ENCODE measurements at regions of chr7 and their contacts with region 1.

Region 1: GRCh38 chr7:149239345-149240191 is at the start of gene ZNF212:
- DNase-seq: peak; percentile 91
- H3K4me3 ChIP-seq: peak within 1 kb of the TSS; percentile 62 to 86 (median 73)
- H3K27ac ChIP-seq: peak within 1 kb of the TSS; percentile 28
- H3K4me1 ChIP-seq: peaks cover 9% of the 10 kb centered on the region
- H3K27me3 ChIP-seq: no peaks in the 10 kb centered on the region
- CTCF ChIP-seq: peak; percentile 91 to 97
- POLR2A ChIP-seq: no peak
- total RNA-seq, gene ZNF212: 9.0 and 9.2 TPM in 2 replicates

Region 2: DNA sequence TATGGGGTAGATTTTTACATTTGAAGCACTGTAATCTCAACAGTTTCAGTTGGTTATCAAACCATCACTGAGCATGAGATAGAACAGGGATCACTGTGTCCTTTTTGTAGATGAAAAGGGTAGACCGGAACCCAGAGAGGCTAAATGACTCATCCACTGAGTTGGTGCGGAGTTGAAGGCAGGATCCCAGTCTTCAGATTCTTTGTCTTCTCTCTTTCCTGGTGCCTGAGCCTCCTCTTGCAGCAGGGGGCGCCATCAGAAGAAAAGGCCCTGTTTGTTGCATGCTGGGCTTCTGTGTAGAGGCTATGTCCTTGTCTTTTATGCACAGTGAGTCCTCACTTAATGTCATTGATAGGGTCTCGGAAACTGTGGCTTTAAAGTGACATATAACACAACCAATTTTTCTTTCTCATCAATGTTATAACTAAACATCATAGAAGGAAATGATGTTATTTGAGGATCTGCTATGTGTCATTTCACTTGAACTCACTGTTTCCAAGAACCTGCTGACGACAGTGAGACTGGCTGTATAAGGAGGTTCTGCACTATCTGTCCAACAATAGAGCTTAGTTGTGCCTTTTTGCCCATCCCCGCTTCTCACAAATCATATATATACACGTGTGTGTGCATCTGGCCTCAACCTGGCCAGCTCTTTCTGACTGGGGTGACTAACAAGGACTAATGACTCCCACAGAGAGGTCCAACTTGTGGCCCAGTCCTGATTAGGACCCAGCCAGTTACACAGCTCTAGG is 29.9 kb before region 1 on chr7:
- CTCF ChIA-PET with region 1: no interaction called
- POLR2A ChIA-PET with region 1: no interaction called
- dilution Hi-C with region 1: no loop called
- intact Hi-C with region 1: loop called (anchors 1 kb)
- DNase-seq: peak; percentile 59
- H3K4me3 ChIP-seq: no peak overlapping the region
- H3K27ac ChIP-seq: peak overlapping the region; percentile 28
- H3K4me1 ChIP-seq: peaks cover 4% of the 10 kb centered on the region
- H3K27me3 ChIP-seq: no peaks in the 10 kb centered on the region
- CTCF ChIP-seq: peak; percentile 73 to 82
- POLR2A ChIP-seq: no peak

Region 3: DNA sequence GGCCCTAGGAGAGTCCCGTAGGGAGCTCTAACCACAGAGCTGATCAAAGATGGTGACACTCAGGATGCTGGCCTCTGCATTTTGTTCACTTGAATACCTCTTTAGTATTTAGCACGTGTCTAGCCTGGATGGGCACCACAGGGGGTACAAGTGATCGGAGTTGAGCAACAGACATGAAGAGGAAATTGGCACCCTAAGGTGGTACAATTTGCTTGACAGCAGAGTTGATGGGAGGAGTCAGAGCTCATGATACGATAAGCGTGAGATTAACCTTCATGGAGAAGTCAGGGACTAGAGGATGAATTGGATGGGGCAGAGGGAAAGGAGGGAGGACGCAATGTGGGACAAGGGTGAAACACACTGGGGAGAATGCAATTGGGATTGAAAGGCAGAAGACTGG is 10.0 kb before region 1 on chr7:
- CTCF ChIA-PET with region 1: no interaction called
- POLR2A ChIA-PET with region 1: no interaction called
- dilution Hi-C with region 1: no loop called
- intact Hi-C with region 1: loop called (anchors 1 kb)
- DNase-seq: no peak
- H3K4me3 ChIP-seq: no peak overlapping the region
- H3K27ac ChIP-seq: no peak overlapping the region
- H3K4me1 ChIP-seq: no peaks in the 10 kb centered on the region
- H3K27me3 ChIP-seq: no peaks in the 10 kb centered on the region
- CTCF ChIP-seq: no peak
- POLR2A ChIP-seq: no peak

Region 4: DNA sequence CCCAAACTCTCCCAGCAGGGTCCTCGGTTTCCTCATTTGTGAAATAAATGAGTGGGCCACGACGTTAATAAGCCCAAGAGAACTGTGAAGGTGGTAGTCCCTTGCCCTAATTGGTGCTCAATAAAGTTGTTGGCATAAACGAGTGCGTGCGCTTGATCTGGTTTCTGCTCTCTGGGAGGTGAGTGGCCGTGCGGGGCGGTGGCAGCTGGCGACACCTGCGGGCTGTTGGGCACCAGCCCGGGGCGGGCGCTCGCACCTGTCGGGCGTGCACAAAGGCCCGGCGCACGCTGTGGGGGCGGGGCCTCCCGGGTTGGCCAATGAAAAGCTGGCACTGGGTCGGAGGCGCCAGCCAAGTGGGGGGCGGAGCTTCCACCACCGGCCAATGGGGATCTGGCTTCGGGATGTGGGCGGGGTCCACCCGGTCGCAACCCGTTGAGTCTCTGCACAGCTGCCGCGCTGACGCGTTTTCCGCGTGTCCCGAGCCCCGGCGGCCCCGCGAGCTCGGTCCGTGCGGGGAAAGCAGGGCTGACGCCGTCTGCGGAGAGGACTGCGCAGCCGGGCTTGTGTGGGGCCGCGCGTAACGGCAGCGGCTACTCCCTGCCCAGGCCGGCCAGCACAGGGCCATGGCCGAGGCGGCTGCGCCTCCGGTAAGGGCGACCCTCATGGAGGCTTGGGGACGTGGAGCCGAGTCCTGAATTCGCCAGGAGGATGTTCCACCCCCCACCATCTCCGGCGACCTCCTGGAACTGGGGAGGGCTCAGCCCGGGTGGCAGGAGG is 45.5 kb after region 1 on chr7:
- CTCF ChIA-PET with region 1: no interaction called
- POLR2A ChIA-PET with region 1: no interaction called
- dilution Hi-C with region 1: no loop called
- intact Hi-C with region 1: loop called (anchors 2 kb)
- DNase-seq: peak; percentile 95
- H3K4me3 ChIP-seq: peak overlapping the region; percentile 43 to 76 (median 73)
- H3K27ac ChIP-seq: no peak overlapping the region
- H3K4me1 ChIP-seq: peaks cover 9% of the 10 kb centered on the region
- H3K27me3 ChIP-seq: no peaks in the 10 kb centered on the region
- CTCF ChIP-seq: no peak
- POLR2A ChIP-seq: peak; percentile 80

Region 5: GRCh38 chr7:149460493-149461277 is 221.1 kb after region 1 on chr7 and contains the start of gene ZNF777:
- CTCF ChIA-PET with region 1: no interaction called
- POLR2A ChIA-PET with region 1: no interaction called
- dilution Hi-C with region 1: no loop called
- intact Hi-C with region 1: loop called (anchors 1 kb)
- DNase-seq: peak; percentile 80
- H3K4me3 ChIP-seq: peak within 1 kb of the TSS; percentile 26 to 82 (median 60)
- H3K27ac ChIP-seq: peak within 1 kb of the TSS; percentile 8
- H3K4me1 ChIP-seq: peaks cover 9% of the 10 kb centered on the region
- H3K27me3 ChIP-seq: no peaks in the 10 kb centered on the region
- CTCF ChIP-seq: peak; percentile 40 to 50
- POLR2A ChIP-seq: peak; percentile 77
- total RNA-seq, gene ZNF777: 11.1 and 12.2 TPM in 2 replicates

Measured in endothelial cell of umbilical vein (primary cell).